OCI-LY7 (cell line): ENCODE measurements at regions of chr2 and their contacts with region 1.

Region 1: DNA sequence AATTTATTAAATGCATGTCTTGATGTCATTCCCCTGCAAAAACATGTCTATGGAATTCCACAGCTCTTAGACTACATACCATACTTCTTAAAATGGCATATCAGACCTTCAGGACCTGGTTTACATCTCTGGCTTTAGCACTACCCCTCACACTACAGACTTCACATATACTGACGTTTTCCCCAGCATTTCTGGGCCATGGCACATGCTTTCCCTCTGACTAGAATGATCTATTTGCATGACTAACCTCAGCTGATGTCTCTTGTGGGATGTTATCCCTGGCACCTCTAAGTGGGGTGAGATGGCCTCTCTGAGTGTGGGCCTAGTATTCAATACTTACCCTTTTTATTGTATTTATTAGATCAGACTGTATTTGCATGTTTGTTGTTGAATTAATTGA is 381.6 kb downstream of the ERBB4 start:
- DNase-seq: no peak
- H3K4me3 ChIP-seq: no peak overlapping the region
- H3K27ac ChIP-seq: no peak overlapping the region
- H3K4me1 ChIP-seq: no peaks in the 10 kb centered on the region
- CTCF ChIP-seq: no peak

Region 2: GRCh38 chr2:211745295-211746097 is 411.5 kb before region 1 on chr2:
- CTCF ChIA-PET with region 1: no interaction called
- POLR2A ChIA-PET with region 1: no interaction called
- intact Hi-C with region 1: loop called (anchors 10 kb)
- DNase-seq: peak; percentile 67
- H3K4me3 ChIP-seq: no peak overlapping the region
- H3K27ac ChIP-seq: no peak overlapping the region
- H3K4me1 ChIP-seq: no peaks in the 10 kb centered on the region
- CTCF ChIP-seq: peak; percentile 92

Region 3: GRCh38 chr2:212135739-212136138 is 21.3 kb before region 1 on chr2:
- CTCF ChIA-PET with region 1: no interaction called
- POLR2A ChIA-PET with region 1: no interaction called
- intact Hi-C with region 1: no loop called
- DNase-seq: no peak
- H3K4me3 ChIP-seq: no peak overlapping the region
- H3K27ac ChIP-seq: no peak overlapping the region
- H3K4me1 ChIP-seq: no peaks in the 10 kb centered on the region
- CTCF ChIP-seq: no peak

Region 4: GRCh38 chr2:212193056-212193455 is 36.0 kb after region 1 on chr2:
- CTCF ChIA-PET with region 1: no interaction called
- POLR2A ChIA-PET with region 1: no interaction called
- intact Hi-C with region 1: no loop called
- DNase-seq: no peak
- H3K4me3 ChIP-seq: no peak overlapping the region
- H3K27ac ChIP-seq: no peak overlapping the region
- H3K4me1 ChIP-seq: no peaks in the 10 kb centered on the region
- CTCF ChIP-seq: no peak